Right ventricle myocardium superior (tissue), 1 donor: ENCODE measurements at regions of chr17 and their contacts with region 1.

Region 1: DNA sequence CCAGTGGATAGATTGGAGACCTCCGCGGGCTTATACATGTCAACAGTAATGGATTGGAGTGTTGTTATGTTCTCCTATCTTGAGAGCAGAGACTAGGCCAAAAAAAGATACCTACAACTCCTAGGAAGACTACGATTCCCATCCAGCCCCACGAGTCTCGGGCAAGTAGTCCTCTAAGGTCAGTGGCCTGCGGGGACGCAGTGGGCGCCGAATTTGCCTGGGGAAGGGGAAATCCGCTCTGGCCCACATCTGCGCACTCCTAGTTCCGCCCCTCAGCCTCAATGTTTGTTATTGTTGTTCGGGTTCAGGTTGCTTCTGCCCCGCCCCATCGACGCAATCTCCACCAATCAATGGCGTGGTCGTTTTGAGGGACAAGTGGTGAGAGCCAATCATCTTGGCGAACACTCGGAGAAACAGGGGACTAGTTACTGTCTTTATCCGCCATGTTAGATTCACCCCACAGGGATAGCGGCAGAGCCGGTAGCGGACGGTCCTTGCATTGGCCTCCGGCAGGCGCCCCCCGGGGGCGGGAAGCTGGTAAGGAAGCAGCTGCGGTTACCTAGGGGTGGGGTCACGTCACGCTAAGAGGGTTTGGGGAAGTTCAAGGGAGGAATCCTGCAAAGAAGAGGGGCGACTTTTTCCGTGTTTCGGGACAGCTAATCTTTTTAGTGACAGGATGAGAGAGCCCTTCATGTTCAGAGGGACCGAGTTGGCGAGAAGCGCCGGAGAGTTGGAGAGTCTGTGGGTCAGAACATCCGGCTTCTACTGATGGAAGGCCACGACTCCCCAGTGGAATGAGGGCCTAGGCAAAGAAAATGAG is at the start of gene NBR1:
- DNase-seq: peak; percentile 96
- ATAC-seq: peak; percentile 93
- total RNA-seq, gene NBR1: 91.1 TPM

Region 2: GRCh38 chr17:43211480-43212402 is 40.8 kb after region 1 on chr17 and contains the start of gene TMEM106A:
- intact Hi-C with region 1: loop called (anchors 5 kb)
- DNase-seq: peak; percentile 83
- ATAC-seq: peak; percentile 90
- total RNA-seq, gene TMEM106A: 3.6 TPM

Region 3: DNA sequence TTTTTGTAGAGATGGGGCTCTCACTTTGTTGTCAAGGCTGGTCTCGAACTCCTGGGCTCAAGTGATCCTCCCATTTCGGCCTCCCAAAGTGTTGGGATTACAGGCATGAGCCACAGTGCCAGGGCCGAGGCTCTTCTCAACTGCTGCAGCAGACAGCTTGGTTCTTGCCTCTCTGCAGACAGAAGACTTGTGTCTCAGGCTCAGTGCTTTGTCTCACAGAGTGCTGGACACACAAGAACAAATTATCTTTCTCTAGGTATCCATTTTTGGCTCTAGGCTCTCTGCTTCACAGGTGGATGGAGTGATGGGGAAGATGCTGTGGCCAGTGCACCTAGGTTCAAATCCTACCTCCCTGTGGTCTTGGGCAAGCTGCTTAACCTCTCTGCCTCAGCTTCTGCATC is 143.6 kb after region 1 on chr17:
- intact Hi-C with region 1: no loop called
- DNase-seq: peak; percentile 13
- ATAC-seq: no peak